ENCODE measurements at regions of chr15 and their contacts with region 1.

Region 1: DNA sequence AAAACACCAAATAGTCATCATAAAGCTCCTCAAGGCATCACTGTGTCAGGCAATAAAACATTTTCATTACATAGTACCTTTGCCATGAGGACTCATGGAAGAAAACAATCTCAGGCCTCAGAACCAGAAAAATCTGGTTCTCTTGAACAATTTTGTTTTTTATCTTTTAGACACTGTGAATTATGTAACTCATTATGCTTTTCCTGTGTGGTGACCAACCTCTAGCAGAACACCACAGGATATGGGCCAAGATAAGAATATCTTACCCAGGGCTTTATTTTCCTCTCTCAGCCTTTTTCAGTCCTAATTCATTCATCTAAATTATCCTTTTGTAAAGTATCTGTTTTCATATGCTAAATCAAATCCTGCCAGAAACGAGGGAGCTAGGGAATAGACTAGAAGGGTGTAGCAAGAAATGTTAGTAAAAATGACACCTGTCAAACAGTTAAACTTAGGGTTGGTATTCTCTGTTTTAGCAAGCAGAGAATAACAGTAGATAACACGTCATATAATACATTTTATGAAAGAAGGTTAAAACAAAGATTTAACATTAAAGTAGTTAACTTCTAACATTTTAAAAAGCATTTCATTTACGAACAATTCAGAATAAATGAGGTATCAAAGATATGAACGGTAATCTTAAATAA is 111.1 kb downstream of the FBXL22 start:
- DNase-seq: no peak
- H3K4me3 ChIP-seq: no peak overlapping the region
- H3K27ac ChIP-seq: peak overlapping the region in 2 of 5 donors; percentile 9 to 66
- H3K4me1 ChIP-seq: peaks cover 0 to 6% of the 10 kb centered on the region in 2 donors
- H3K27me3 ChIP-seq: no peaks in the 10 kb centered on the region
- CTCF ChIP-seq: no peak
- POLR2A ChIP-seq: no peak

Region 2: GRCh38 chr15:63655683-63656372 is 52.4 kb before region 1 on chr15:
- intact Hi-C with region 1: loop called in 1 of 2 experiments (anchors 10 kb)
- DNase-seq: no peak
- H3K4me3 ChIP-seq: no peak overlapping the region
- H3K27ac ChIP-seq: no peak overlapping the region
- H3K4me1 ChIP-seq: no peaks in the 10 kb centered on the region
- H3K27me3 ChIP-seq: no peaks in the 10 kb centered on the region
- CTCF ChIP-seq: no peak
- POLR2A ChIP-seq: no peak

Measured in adrenal gland (tissue), 19 donors.